Dendritic cell treated with granulocyte-macrophage colony-stimulating factor and Interleukin-4, amounts not matched to agents 40 ng/mL and 50 ng/mL, for 4 days (primary cell): ENCODE measurements at regions of chr3 and their contacts with region 1.

Region 1: GRCh38 chr3:188339410-188340295 is 185.7 kb downstream of the LPP start:
- H3K4me3 Mint-ChIP-seq: no peak overlapping the region
- H3K27ac Mint-ChIP-seq: no peak overlapping the region
- H3K4me1 Mint-ChIP-seq: peaks cover 29% of the 10 kb centered on the region
- H3K27me3 Mint-ChIP-seq: no peaks in the 10 kb centered on the region

Region 2: DNA sequence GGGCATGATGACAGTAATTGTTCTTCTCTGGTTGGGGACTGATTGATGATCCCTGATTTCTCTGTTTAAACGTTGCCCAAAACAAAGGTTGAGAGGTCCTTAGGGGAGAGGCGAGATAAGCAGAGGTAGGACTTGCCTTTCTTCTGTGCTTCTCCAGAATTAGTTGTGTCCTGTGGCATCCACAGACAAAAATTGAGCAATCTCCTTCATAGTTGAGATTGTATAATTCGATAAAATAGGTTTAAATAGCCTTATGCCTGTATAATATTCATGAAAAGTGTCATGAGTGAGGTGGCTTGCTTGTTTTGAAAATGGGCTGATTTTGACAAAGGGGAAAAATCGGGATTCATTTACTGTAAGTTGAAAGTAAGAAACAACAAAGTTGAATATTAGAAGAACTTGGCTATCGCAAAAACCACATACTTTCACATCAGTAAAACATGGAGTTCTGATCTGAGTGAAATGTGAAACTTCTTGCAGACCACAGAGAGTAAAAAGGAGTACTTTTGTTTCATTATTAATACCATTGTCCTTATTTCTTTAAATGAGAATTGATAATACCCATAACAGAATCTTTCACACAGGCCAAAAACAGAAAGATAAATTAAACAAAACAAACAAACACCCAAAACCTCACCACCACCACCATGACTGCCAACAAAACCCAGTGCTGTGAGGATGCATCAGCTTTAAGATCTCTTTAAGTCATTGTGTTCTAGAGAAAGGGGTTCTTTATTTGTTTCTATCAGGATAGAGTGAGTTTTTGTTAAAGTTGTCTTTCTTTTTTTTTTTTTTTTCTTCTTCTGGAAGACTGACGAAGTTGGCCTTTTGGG is 30.0 kb before region 1 on chr3:
- intact Hi-C with region 1: loop called (anchors 5 kb)
- H3K4me3 Mint-ChIP-seq: peak overlapping the region; percentile 40
- H3K27ac Mint-ChIP-seq: peak overlapping the region; percentile 74
- H3K4me1 Mint-ChIP-seq: peaks cover 52% of the 10 kb centered on the region
- H3K27me3 Mint-ChIP-seq: no peaks in the 10 kb centered on the region

Region 3: DNA sequence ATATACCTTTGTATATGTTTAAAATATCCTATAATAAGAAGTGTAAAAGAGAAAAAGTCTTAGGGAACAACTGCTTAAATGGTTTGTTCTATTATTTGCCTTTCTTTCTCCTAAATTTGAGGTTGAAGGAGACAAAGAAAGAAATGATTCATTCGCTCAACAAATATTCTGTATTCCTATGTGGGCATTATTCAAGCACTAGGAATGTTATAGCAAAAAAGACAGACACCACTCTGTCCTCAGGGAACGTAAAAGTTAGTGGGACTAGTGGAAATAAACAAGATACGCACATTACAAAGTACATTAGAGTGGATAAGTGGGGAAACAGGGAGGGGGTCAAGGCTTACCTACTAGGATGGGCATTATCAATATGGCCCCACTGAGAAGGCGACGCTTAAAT is 146.5 kb after region 1 on chr3:
- intact Hi-C with region 1: no loop called
- H3K4me3 Mint-ChIP-seq: no peak overlapping the region
- H3K27ac Mint-ChIP-seq: no peak overlapping the region
- H3K4me1 Mint-ChIP-seq: peaks cover 13% of the 10 kb centered on the region
- H3K27me3 Mint-ChIP-seq: no peaks in the 10 kb centered on the region